AG04450 (cell line): ENCODE measurements at regions of chr5 and their contacts with region 1.

Region 1: DNA sequence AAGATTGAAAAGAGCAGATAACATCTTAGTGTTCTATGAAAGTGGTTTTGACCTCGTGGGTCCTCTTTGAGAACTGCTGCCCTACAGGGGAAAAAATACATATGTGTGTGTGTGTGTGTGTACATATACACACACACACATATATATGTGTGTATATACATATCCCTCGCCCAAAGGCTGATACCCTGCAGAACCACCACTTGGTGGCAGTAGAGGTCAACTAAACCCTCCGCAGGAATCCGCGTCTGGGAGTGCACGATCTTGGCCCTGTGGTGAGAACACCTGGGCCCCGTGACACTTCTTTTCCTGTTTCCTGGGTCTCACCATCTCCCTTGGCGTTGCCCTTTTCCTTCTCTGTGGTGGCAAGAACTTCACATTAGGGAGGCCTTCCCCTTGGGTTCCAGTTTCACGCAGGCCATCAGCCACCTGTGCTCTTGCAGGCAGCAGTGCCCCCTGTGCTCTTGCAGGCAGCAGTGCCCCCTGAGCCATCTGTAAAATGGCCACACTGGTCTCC is 8.2 kb downstream of the IL9 start:
- DNase-seq: peak; percentile 39
- H3K4me3 ChIP-seq: no peak overlapping the region
- H3K27ac ChIP-seq: no peak overlapping the region
- H3K27me3 ChIP-seq: peaks cover 15% of the 10 kb centered on the region
- CTCF ChIP-seq: peak; percentile 88

Region 2: GRCh38 chr5:136182618-136183017 is 295.2 kb after region 1 on chr5:
- CTCF ChIA-PET with region 1: interaction called, 9 read pairs
- POLR2A ChIA-PET with region 1: interaction called, 14 read pairs
- DNase-seq: no peak
- H3K4me3 ChIP-seq: no peak overlapping the region
- H3K27ac ChIP-seq: no peak overlapping the region
- H3K27me3 ChIP-seq: no peaks in the 10 kb centered on the region
- CTCF ChIP-seq: no peak

Region 3: GRCh38 chr5:136212252-136212721 is 324.9 kb after region 1 on chr5:
- CTCF ChIA-PET with region 1: interaction called, 26 read pairs
- POLR2A ChIA-PET with region 1: no interaction called
- DNase-seq: no peak
- H3K4me3 ChIP-seq: no peak overlapping the region
- H3K27ac ChIP-seq: no peak overlapping the region
- H3K27me3 ChIP-seq: peaks cover 11% of the 10 kb centered on the region
- CTCF ChIP-seq: peak; percentile 92